H1 (cell line): ENCODE measurements at regions of chr9 and their contacts with region 1.

Region 1: DNA sequence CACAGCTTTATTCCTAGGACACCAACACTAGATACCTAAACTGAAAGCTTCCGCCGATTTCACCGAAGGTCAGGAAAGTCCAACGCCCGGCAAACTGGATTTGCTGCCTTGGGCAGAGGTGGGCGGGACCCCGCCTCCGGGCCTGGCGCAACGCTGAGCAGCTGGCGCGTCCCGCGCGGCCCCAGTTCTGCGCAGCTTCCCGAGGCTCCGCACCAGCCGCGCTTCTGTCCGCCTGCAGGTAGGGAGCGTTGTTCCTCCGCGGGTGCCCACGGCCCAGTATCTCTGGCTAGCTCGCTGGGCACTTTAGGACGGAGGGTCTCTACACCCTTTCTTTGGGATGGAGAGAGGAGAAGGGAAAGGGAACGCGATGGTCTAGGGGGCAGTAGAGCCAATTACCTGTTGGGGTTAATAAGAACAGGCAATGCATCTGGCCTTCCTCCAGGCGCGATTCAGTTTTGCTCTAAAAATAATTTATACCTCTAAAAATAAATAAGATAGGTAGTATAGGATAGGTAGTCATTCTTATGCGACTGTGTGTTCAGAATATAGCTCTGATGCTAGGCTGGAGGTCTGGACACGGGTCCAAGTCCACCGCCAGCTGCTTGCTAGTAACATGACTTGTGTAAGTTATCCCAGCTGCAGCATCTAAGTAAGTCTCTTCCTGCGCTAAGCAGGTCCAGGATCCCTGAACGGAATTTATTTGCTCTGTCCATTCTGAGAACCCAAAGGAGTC is at the start of gene CD274:
- DNase-seq: peak; percentile 79 to 86
- H3K4me3 ChIP-seq: peak within 1 kb of the TSS; percentile 27 to 52 (median 28); a peak in 5 of 8 replicates
- H3K27ac ChIP-seq: no peak within 1 kb of the TSS
- H3K4me1 ChIP-seq: peaks cover 0 to 2% (median 0%) of the 10 kb centered on the region in 4 experiments; a peak in 2 of 7 replicates
- H3K27me3 ChIP-seq: no peaks in the 10 kb centered on the region; a peak in 1 of 7 replicates
- CTCF ChIP-seq: peak; percentile 77 to 88 (median 80)
- EP300 ChIP-seq: no peak
- POLR2A ChIP-seq: no peak
- RAD21 ChIP-seq: peak; percentile 85 to 89
- total RNA-seq, gene CD274: 0.15 TPM in 1 of 2 replicates, not detected in the other

Region 2: DNA sequence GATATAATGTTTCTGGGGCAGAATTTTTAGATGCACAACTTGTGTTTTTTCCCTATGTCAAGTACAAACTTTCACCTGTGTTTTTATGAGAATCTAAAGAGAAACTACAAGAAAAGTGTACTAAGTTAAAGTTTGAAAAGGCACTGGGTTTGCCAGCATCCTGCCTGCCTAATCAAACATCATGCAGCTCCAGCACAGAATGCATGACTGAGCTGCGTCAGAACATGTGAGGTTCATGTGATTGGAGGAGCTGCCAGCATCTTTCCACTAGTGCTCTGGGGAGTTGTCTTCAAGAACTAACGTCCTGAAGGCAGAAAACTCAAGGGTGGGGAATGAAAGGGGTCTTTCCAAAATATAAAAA is 132.3 kb after region 1 on chr9:
- CTCF ChIA-PET with region 1: interaction called, 42 read pairs
- POLR2A ChIA-PET with region 1: no interaction called
- DNase-seq: no peak
- H3K4me3 ChIP-seq: no peak overlapping the region
- H3K27ac ChIP-seq: no peak overlapping the region
- H3K4me1 ChIP-seq: no peaks in the 10 kb centered on the region
- H3K27me3 ChIP-seq: no peaks in the 10 kb centered on the region
- CTCF ChIP-seq: no peak
- EP300 ChIP-seq: no peak
- POLR2A ChIP-seq: no peak
- RAD21 ChIP-seq: no peak

Region 3: GRCh38 chr9:5718296-5719032 is 267.9 kb after region 1 on chr9:
- CTCF ChIA-PET with region 1: no interaction called
- POLR2A ChIA-PET with region 1: no interaction called
- DNase-seq: no peak
- H3K4me3 ChIP-seq: no peak overlapping the region
- H3K27ac ChIP-seq: no peak overlapping the region
- H3K4me1 ChIP-seq: no peaks in the 10 kb centered on the region
- H3K27me3 ChIP-seq: no peaks in the 10 kb centered on the region
- CTCF ChIP-seq: no peak
- EP300 ChIP-seq: no peak
- POLR2A ChIP-seq: no peak
- RAD21 ChIP-seq: no peak